ENCODE measurements at regions of chr1 and their contacts with region 1.

Region 1: DNA sequence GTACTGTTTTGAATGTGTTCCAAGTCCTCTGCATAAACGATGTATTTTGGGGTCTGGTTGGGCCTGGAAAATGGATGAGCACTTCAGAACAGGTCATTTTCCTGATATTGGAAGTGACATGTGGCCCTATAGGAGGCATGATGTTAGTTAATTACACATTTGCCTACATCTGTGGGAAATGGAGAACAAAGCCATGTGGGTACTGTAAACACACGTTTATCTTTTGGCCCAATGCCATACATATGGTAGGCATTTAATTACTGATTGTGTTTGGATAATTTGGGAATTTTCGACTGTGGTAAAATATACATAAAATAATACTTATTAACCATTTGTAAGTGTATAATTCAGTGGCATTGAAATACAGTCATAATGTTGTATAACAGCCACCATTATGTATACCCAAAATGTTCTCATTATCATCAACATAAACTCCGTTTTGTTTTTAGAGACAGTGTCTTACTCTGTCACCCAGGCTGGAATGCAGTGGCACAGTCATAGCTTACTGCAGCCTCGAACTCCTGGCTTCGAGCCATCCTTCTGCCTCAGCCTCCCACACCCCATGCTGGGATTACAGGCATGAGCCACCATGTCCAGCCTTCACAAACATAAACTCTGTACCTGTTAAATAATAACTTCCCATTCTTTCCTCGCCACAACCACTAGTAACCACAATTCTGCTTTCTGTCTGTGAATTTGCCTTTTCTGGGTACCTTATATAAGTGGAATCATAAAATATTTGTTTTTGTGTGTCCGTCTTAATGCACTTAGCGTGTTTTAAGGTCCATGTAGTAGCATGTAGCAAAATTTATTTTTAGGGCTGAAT is 11.9 kb upstream of the RNPEP start:
- DNase-seq: no peak
- CTCF ChIP-seq: no peak

Region 2: GRCh38 chr1:201859424-201859823 is 111.1 kb before region 1 on chr1:
- in situ Hi-C with region 1: no loop called
- DNase-seq: no peak
- CTCF ChIP-seq: no peak

Region 3: DNA sequence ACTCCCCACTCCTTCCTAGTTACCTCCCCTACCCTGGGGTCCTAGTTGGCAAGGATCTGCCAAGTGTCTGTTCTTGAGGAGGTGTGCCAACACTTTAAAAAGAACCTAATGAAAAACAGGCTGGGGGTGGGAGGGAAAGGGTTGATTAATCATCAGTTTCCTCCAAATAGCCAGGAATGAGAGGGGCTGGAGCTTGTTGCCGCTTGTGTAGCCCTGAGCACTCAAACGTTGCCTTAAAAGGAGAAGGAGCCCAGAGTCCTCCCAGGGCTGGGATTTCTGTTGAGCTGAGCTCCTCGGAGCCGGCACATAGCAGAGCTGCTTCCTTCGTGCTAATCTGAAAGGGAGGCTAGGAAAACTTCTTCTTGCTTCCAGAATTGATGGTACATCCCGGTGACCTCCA is 66.0 kb before region 1 on chr1:
- in situ Hi-C with region 1: loop called (anchors 5 kb)
- DNase-seq: no peak
- CTCF ChIP-seq: no peak